Activated CD4-positive, alpha-beta memory T cell treated with anti-CD3 and anti-CD28 coated beads for 36 hours (primary cell): ENCODE measurements at regions of chr19 and their contacts with region 1.

Region 1: DNA sequence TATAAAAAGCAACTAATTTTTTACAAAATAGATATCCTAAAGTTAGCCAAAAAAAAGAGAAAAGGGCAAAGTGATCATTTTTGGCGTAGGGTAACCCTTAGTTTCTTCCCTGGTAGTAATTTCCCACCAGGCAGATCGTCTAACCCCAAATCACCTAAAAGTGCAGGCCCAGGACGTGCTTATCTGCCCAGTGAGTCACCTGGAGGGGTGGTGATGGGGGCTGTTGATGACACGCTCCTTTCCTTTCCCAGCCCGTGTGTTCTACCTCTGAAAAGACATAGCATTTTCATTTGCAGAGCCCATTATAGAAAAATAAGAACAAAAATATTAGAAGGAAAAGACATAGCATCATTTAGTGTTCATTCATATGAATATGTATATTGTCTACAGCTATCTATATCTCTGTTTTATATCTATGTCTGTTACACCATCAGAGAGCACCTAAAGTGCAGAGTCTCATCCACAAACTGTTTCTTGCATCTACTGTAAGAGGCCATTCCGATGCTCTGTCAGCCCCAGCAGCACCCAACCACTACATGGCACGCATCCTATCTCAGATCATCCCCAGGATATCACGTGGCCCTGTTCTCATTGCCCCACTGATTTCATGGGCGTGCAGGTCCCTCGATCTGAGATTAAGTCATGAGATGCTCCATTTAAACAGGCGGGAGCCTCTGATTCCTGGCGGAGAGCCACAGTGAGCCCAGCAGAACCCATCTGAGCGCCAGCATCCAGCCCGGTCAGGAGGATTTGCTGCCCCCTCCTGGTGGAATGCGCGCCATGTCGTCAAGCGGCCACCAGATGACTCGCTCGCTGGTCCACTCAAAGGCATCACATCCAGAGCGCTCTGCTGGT is 8.5 kb upstream of the LILRB3 start:
- DNase-seq: peak; percentile 90
- H3K4me3 Mint-ChIP-seq: no peak overlapping the region
- H3K27ac Mint-ChIP-seq: no peak overlapping the region
- H3K4me1 Mint-ChIP-seq: peaks cover 8% of the 10 kb centered on the region
- H3K27me3 Mint-ChIP-seq: peaks cover 24% of the 10 kb centered on the region

Region 2: DNA sequence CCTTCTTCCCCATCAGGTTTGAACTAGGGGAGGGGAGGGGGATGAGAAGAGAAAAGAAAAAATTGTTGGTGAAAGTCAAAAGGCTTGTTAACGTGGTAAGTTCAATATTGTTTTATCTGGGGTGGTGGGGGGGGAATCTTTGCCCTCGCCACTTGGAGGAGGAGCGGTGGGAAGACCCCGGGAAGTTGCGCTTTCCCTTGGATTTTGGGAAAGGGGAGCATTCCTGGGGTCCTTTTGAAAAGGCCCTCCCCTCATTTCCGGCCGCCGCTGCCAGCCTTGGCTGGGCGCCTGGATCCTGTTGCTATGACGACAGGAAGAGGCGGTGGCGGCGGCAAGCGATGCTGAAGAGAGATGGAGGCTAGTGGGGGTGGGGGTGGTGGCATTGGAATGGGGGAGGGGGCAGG is 273.1 kb before region 1 on chr19:
- CTCF ChIA-PET with region 1: no interaction called
- POLR2A ChIA-PET with region 1: no interaction called
- intact Hi-C with region 1: no loop called
- DNase-seq: no peak
- H3K4me3 Mint-ChIP-seq: no peak overlapping the region
- H3K27ac Mint-ChIP-seq: no peak overlapping the region
- H3K4me1 Mint-ChIP-seq: peaks cover 2% of the 10 kb centered on the region
- H3K27me3 Mint-ChIP-seq: peaks cover 46% of the 10 kb centered on the region

Region 3: DNA sequence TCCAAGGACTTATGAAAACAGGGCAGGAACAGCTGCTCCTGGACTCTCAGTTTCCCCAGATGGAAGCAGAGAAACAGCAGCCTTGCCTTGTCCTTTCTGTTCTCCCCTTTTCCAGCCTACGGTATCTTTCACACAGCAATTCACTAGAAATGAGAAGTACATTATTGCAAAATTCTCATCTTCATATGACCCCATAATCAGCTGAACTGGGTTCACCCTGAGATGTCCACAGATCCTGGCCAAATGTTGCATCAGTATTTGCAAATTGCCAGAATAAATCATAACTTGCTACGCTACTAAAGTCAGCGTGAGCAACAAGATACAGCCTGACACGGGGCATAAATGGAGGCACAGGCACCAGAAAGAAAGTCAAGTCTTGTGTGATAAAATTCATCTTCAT is 183.7 kb before region 1 on chr19:
- CTCF ChIA-PET with region 1: no interaction called
- POLR2A ChIA-PET with region 1: no interaction called
- intact Hi-C with region 1: no loop called
- DNase-seq: no peak
- H3K4me3 Mint-ChIP-seq: no peak overlapping the region
- H3K27ac Mint-ChIP-seq: no peak overlapping the region
- H3K4me1 Mint-ChIP-seq: no peaks in the 10 kb centered on the region
- H3K27me3 Mint-ChIP-seq: peaks cover 18% of the 10 kb centered on the region

Region 4: DNA sequence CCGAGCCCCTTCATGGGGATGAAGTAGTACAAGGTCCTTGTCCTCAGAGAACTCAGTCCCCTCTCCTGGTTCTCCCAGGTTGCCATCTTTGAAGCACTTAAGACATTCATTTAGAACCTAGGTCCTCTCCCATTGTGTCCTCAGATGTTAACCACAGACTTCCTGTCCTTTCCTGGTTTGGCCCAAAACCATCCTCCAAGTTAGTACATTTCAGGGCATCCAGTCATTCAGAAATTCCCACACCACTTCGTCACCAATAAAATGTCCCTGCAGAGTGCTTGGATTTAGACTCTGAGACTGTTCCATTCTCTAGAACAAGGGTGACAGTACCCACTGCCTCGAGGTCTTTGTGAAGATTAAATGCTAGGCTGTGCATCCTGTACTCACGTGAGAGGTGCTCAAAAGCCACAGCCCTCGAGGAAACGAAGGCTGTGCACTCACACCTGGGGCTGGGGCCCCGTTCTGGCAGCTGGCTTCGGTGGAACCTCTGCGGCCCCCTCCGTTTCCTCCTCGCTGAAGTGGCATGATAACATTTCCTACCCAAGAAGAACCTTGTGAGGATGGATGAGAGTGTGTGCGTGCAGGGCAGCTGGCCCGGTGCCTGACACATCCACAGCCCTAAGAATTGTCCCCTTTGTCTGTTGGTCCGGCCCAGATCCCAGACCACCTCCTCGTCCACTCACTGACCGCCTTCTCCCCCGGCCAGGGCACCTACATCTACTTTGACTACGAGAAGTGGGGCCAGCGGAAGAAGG is 76.5 kb before region 1 on chr19:
- CTCF ChIA-PET with region 1: no interaction called
- POLR2A ChIA-PET with region 1: no interaction called
- intact Hi-C with region 1: no loop called
- DNase-seq: peak; percentile 65
- H3K4me3 Mint-ChIP-seq: no peak overlapping the region
- H3K27ac Mint-ChIP-seq: peak overlapping the region; percentile 88
- H3K4me1 Mint-ChIP-seq: peaks cover 32% of the 10 kb centered on the region
- H3K27me3 Mint-ChIP-seq: no peaks in the 10 kb centered on the region

Region 5: GRCh38 chr19:54168174-54168917 is 63.0 kb before region 1 on chr19:
- CTCF ChIA-PET with region 1: interaction called, 8 read pairs
- POLR2A ChIA-PET with region 1: no interaction called
- intact Hi-C with region 1: loop called (anchors 1 kb)
- DNase-seq: peak; percentile 94
- H3K4me3 Mint-ChIP-seq: peak overlapping the region; percentile 5
- H3K27ac Mint-ChIP-seq: no peak overlapping the region
- H3K4me1 Mint-ChIP-seq: peaks cover 8% of the 10 kb centered on the region
- H3K27me3 Mint-ChIP-seq: no peaks in the 10 kb centered on the region

Region 6: DNA sequence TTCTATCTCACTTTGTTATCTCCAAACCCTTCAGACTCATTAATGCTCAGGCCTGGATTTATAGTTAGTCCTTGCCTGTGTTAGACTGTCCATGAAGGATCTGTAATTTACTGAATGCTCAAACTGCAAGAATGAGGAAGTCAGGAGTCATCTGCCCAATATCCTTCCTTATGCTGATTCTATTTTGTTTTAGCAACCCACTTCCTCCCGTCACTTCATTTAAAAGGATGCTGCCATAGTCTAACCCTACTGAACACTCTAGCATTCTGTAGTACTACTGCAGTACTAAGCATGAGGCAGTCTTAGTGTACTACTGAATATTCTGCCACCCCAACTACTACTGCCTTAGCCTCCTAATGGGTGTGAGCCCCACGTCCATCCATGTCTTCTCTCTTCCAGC is 644.2 kb after region 1 on chr19:
- CTCF ChIA-PET with region 1: no interaction called
- POLR2A ChIA-PET with region 1: no interaction called
- intact Hi-C with region 1: no loop called
- DNase-seq: no peak
- H3K4me3 Mint-ChIP-seq: no peak overlapping the region
- H3K27ac Mint-ChIP-seq: no peak overlapping the region
- H3K4me1 Mint-ChIP-seq: no peaks in the 10 kb centered on the region
- H3K27me3 Mint-ChIP-seq: peaks cover 11% of the 10 kb centered on the region